ENCODE measurements at regions of chr12 and their contacts with region 1.

Region 1: DNA sequence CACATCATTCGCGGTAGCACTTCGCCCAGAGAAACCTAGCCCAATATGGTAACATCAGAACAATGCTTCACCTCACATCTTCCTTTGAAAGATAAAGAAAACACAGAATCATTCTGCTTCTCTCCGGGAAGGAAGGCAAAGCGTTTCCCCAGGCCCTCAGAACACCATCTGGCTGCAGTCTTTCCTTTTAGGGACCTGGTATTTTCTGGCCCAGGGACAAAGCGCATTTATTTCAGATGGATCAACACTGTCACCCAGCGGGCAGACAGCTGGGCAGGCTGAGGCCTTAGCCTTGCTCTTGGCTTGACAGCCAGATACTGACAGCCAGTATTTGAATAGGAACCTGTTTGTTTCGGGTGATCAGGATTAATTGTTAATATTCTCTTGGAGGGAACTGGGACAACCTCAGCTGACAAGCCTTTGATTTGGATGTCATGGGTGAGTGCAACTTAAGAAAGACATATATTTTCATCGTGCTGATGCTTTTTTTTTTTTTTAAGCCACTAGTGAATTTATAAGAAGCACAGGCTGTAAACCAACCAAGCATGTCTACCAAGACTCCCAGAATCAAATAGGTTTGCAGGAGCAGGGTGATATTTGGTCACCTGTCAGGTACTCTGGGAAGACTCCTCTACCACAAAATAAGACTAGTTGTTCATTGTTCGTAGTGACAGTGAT is 118.9 kb downstream of the VEZT start:
- DNase-seq: peak; percentile 33 to 76
- ATAC-seq: peak; percentile 87 to 94 (median 93)
- H3K4me3 ChIP-seq: peak overlapping the region in 5 of 10 donors; percentile 2 to 36 (median 21)
- H3K27ac ChIP-seq: peak overlapping the region in 9 of 10 donors; percentile 37 to 69 (median 54)
- H3K4me1 ChIP-seq: peaks cover 0 to 16% (median 9%) of the 10 kb centered on the region in 9 donors
- H3K27me3 ChIP-seq: no peaks in the 10 kb centered on the region
- CTCF ChIP-seq: peak; percentile 71 to 94 (median 89)

Region 2: GRCh38 chr12:94277426-94278000 is 1059.0 kb before region 1 on chr12:
- intact Hi-C with region 1: no loop called
- DNase-seq: no peak
- ATAC-seq: peak in 3 of 8 donors; percentile 49 to 73 (median 51)
- H3K4me3 ChIP-seq: no peak overlapping the region
- H3K27ac ChIP-seq: no peak overlapping the region
- H3K4me1 ChIP-seq: peaks cover 0 to 23% (median 6%) of the 10 kb centered on the region in 9 donors
- H3K27me3 ChIP-seq: no peaks in the 10 kb centered on the region
- CTCF ChIP-seq: no peak

Region 3: DNA sequence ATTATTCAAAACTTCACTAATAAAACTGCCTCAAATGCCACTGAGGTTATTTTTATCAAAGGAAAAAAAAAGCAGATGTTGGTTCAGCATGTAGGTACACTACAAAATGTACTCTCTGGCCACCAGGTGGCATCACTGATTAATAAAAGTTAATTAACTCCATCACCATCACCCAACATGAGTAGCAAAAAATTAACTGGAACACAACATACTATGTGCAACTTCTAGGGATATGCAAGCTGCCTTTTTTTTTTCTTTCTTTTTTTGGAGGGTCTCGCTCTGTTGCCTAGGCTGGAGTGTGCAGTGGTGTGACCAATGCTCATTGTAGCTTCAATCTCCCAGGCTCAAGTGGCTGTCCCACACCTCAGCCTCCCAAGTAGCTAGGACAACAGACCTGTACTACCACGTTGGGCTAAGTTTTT is 219.3 kb before region 1 on chr12:
- intact Hi-C with region 1: loop called (anchors 1 to 5 kb)
- DNase-seq: peak in 1 of 2 donors; percentile 81
- ATAC-seq: peak; percentile 80 to 94 (median 92)
- H3K4me3 ChIP-seq: no peak overlapping the region
- H3K27ac ChIP-seq: peak overlapping the region in 2 of 10 donors; percentile 2 to 23
- H3K4me1 ChIP-seq: peaks cover 0 to 26% (median 19%) of the 10 kb centered on the region in 9 donors
- H3K27me3 ChIP-seq: no peaks in the 10 kb centered on the region
- CTCF ChIP-seq: peak; percentile 52 to 84 (median 74)